ENCODE measurements at regions of chr3 and their contacts with region 1.

Region 1: DNA sequence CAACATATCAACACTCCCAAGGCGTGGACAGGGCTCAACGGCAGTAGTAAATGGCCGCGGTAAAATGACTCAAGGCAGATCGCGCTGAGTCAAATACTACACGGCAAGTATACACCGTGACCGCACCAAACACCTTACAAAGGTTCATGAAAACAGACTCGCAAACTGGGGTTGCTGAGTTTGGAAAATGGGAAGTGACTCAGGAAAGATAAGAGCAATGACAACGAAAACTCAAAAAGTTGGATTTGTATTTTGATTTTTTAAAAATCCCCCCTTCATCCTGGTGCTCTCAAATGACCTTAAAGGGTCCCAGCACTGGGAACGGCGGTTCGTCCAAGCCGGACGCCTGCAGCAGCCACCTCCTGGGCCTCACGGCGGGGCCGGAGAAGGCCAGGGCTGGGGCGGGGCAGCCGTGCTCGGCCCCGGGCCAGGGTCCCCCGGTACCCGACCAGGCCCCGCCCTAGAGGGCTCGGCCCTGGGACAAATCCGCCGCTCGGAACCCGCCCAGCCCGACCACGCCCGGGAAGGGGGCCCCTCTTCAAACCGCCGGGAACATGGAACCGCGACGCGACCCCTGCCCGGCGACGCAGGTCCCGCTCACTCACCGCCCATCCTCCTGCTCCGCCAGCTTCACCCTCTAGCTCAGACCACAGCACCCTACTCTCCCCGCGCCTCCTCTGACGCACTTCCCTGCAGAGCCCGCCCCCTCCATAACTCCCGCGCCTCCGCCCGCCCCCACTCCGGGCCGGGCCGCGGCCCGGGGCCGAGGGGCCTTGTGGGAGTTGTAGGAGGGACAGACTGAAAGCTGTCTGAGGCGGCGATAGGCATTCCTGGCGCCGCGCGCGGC is at the start of gene CLDND1:
- DNase-seq: peak; percentile 91
- ATAC-seq: peak; percentile 99
- H3K4me3 ChIP-seq: peak within 1 kb of the TSS; percentile 71 to 76 (median 74)
- H3K27ac ChIP-seq: peak within 1 kb of the TSS; percentile 69
- H3K4me1 ChIP-seq: peaks cover 17% of the 10 kb centered on the region
- H3K27me3 ChIP-seq: no peaks in the 10 kb centered on the region; a peak in 1 of 5 replicates
- CTCF ChIP-seq: no peak
- EP300 ChIP-seq: no peak; a peak in 1 of 4 replicates
- POLR2A ChIP-seq: peak; percentile 81 to 92
- RAD21 ChIP-seq: peak; percentile 35
- total RNA-seq, gene CLDND1: 30.3 and 50.8 TPM in 2 replicates

Region 2: DNA sequence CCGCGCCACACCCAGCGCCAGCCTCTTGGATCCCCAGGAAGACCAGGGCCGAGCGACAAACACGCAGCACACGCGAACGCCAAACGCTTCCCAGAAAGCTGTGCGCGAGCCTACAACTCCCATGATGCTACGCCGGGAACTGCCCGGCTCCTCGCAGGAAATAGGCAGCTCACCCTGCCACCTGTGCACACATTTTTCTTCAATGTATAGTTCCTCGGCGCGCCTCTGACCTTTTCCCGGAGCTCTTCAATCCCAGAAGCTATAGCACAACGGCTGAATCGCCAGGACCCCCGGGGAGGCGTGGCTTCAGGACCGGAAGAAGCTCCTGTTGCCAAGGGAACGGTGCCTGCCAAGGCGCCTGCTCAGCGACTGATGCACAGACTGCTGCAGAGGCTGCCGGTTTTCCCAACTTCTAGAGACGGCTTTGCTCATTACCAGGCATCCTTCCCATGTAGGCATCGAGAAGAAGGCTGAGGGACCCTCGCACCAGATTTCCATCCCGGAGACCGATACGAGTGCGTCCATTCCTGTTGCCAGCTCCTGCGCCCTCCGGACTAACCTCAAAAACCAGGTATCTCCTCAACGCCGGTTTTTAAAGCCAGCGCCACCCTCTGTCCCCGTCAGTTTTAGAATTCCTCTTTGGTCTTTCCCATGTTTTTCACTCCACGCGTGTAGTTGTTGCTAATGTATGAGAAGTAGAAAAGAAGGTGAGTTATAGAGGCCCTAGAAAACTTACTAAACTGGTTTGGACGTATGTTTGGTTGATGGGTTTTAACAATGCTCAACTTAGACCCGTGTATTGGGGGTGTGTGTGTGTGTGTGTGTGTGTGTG is 757.8 kb before region 1 on chr3 and contains the start of gene ARL6:
- CTCF ChIA-PET with region 1: no interaction called
- POLR2A ChIA-PET with region 1: no interaction called
- in situ Hi-C with region 1: no loop called
- intact Hi-C with region 1: loop called (anchors 10 kb)
- DNase-seq: peak; percentile 71
- ATAC-seq: peak; percentile 98
- H3K4me3 ChIP-seq: peak within 1 kb of the TSS; percentile 70 to 87 (median 78)
- H3K27ac ChIP-seq: peak within 1 kb of the TSS; percentile 40
- H3K4me1 ChIP-seq: peaks cover 27% of the 10 kb centered on the region
- H3K27me3 ChIP-seq: no peaks in the 10 kb centered on the region; a peak in 3 of 5 replicates
- CTCF ChIP-seq: peak; percentile 25
- EP300 ChIP-seq: no peak
- POLR2A ChIP-seq: peak in 1 of 2 experiments; percentile 77; a peak in 3 of 4 replicates
- RAD21 ChIP-seq: no peak
- total RNA-seq, gene ARL6: 3.7 and 6.2 TPM in 2 replicates

Region 3: GRCh38 chr3:98573181-98573728 is 50.8 kb after region 1 on chr3:
- CTCF ChIA-PET with region 1: no interaction called
- POLR2A ChIA-PET with region 1: no interaction called
- in situ Hi-C with region 1: loop called (anchors 10 kb)
- intact Hi-C with region 1: no loop called
- DNase-seq: no peak
- ATAC-seq: no peak
- H3K4me3 ChIP-seq: no peak overlapping the region
- H3K27ac ChIP-seq: no peak overlapping the region
- H3K4me1 ChIP-seq: peaks cover 25% of the 10 kb centered on the region
- H3K27me3 ChIP-seq: no peaks in the 10 kb centered on the region
- CTCF ChIP-seq: 0 out of 2 replicates have a peak, but pooled peaks have one; percentile 12
- EP300 ChIP-seq: no peak
- POLR2A ChIP-seq: no peak
- RAD21 ChIP-seq: no peak

Region 4: GRCh38 chr3:98593046-98593936 is 70.8 kb after region 1 on chr3 and contains the start of gene CPOX:
- CTCF ChIA-PET with region 1: no interaction called
- POLR2A ChIA-PET with region 1: interaction called, 7 read pairs
- in situ Hi-C with region 1: no loop called
- intact Hi-C with region 1: loop called (anchors 1 kb)
- DNase-seq: peak; percentile 96
- ATAC-seq: peak; percentile 98
- H3K4me3 ChIP-seq: peak within 1 kb of the TSS; percentile 66 to 85 (median 82)
- H3K27ac ChIP-seq: peak within 1 kb of the TSS; percentile 66
- H3K4me1 ChIP-seq: peaks cover 51% of the 10 kb centered on the region
- H3K27me3 ChIP-seq: no peaks in the 10 kb centered on the region
- CTCF ChIP-seq: peak; percentile 23
- EP300 ChIP-seq: peak in 1 of 2 experiments; percentile 60; a peak in 2 of 4 replicates
- POLR2A ChIP-seq: peak; percentile 13 to 66; a peak in 3 of 4 replicates
- RAD21 ChIP-seq: no peak; the same call in 1 of the 2 replicates
- total RNA-seq, gene CPOX: 35.2 and 37.2 TPM in 2 replicates

Measured in HepG2 (cell line).